Ascending aorta (tissue), 2 donors: ENCODE measurements at regions of chr15 and their contacts with region 1.

Region 1: GRCh38 chr15:25670025-25670554 is 193.0 kb downstream of the ATP10A start:
- DNase-seq: peak; percentile 63 to 87
- H3K4me3 ChIP-seq: peak overlapping the region; percentile 14 to 50
- H3K27ac ChIP-seq: peak overlapping the region; percentile 89 to 92
- H3K4me1 ChIP-seq: peaks cover 20 to 55% of the 10 kb centered on the region in 2 donors
- H3K27me3 ChIP-seq: no peaks in the 10 kb centered on the region
- CTCF ChIP-seq: peak in 1 of 3 experiments; percentile 13

Region 2: GRCh38 chr15:25372298-25372697 is 297.8 kb before region 1 on chr15:
- intact Hi-C with region 1: loop called (anchors 10 kb)
- DNase-seq: no peak
- H3K4me3 ChIP-seq: no peak overlapping the region
- H3K27ac ChIP-seq: peak overlapping the region in 1 of 2 donors; percentile 70
- H3K4me1 ChIP-seq: peaks cover 0 to 11% of the 10 kb centered on the region in 2 donors
- H3K27me3 ChIP-seq: no peaks in the 10 kb centered on the region
- CTCF ChIP-seq: no peak

Region 3: DNA sequence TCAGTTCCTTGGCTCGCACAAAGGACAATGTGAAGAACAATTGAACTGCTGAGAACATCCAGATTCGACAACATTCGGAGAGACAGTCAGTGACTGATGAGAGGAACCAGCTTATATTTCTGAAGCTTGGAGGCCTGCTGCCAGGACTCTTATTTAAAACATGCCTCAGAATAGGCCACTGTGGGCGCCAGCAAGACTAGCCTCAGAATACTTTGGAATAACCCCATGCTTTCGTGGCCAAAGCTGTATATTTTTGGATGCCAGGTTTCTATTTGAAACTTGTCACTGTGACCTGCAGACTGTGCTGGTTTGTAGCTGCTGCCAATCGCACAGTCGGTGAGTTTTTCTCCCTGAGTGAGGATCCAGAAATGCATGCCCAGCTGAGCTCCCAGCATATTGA is 101.3 kb before region 1 on chr15:
- intact Hi-C with region 1: loop called (anchors 5 kb)
- DNase-seq: peak; percentile 25 to 83
- H3K4me3 ChIP-seq: no peak overlapping the region
- H3K27ac ChIP-seq: peak overlapping the region; percentile 75 to 77
- H3K4me1 ChIP-seq: peaks cover 4 to 61% of the 10 kb centered on the region in 2 donors
- H3K27me3 ChIP-seq: no peaks in the 10 kb centered on the region
- CTCF ChIP-seq: no peak

Region 4: GRCh38 chr15:25717457-25718168 is 47.5 kb after region 1 on chr15:
- intact Hi-C with region 1: loop called (anchors 2 kb)
- DNase-seq: peak in 1 of 2 donors; percentile 81
- H3K4me3 ChIP-seq: no peak overlapping the region
- H3K27ac ChIP-seq: peak overlapping the region; percentile 84
- H3K4me1 ChIP-seq: peaks cover 5 to 38% of the 10 kb centered on the region in 2 donors
- H3K27me3 ChIP-seq: no peaks in the 10 kb centered on the region
- CTCF ChIP-seq: no peak

Region 5: GRCh38 chr15:26082221-26083109 is 412.4 kb after region 1 on chr15:
- intact Hi-C with region 1: loop called (anchors 5 kb)
- DNase-seq: peak; percentile 90 to 99
- H3K4me3 ChIP-seq: peak overlapping the region; percentile 68 to 89
- H3K27ac ChIP-seq: peak overlapping the region; percentile 89 to 92
- H3K4me1 ChIP-seq: peaks cover 0 to 7% of the 10 kb centered on the region in 2 donors
- H3K27me3 ChIP-seq: no peaks in the 10 kb centered on the region
- CTCF ChIP-seq: peak in 1 of 3 experiments; percentile 15

Region 6: DNA sequence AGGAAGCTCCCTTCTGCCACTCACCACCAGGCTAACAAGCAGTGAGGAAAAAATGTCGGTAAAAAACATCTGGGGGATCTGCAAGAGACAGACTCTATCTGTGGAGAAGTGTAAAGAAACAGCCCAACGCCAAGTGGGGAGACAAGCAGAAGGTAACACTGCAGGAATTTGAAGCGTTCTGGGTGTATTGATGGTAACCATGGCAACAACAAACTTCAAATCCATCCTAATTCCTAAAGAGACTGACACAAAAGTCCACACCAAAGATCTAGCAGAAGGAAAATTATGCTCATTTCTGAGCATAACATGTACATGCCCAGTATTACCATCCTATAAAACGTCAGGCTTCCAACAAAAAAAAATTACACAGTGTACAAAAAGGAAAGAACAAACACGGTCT is 653.5 kb after region 1 on chr15:
- intact Hi-C with region 1: no loop called
- DNase-seq: no peak
- H3K4me3 ChIP-seq: no peak overlapping the region
- H3K27ac ChIP-seq: no peak overlapping the region
- H3K4me1 ChIP-seq: no peaks in the 10 kb centered on the region
- H3K27me3 ChIP-seq: no peaks in the 10 kb centered on the region
- CTCF ChIP-seq: no peak